MCF 10A (cell line): ENCODE measurements at regions of chr10 and their contacts with region 1.

Region 1: GRCh38 chr10:113854011-113854760 is at the starts of genes DCLRE1A and NHLRC2:
- DNase-seq: peak; percentile 82
- H3K4me3 Mint-ChIP-seq: peak within 1 kb of the TSS; percentile 98
- H3K27ac Mint-ChIP-seq: peak within 1 kb of the TSS; percentile 98
- H3K4me1 Mint-ChIP-seq: peaks cover 14% of the 10 kb centered on the region
- H3K27me3 Mint-ChIP-seq: no peaks in the 10 kb centered on the region
- CTCF ChIP-seq: no peak
- total RNA-seq, gene DCLRE1A: 9.0 and 9.2 TPM in 2 replicates
- total RNA-seq, gene NHLRC2: 39.8 and 40.3 TPM in 2 replicates

Region 2: GRCh38 chr10:113843972-113844485 is 10.2 kb before region 1 on chr10:
- CTCF ChIA-PET with region 1: no interaction called
- POLR2A ChIA-PET with region 1: interaction called, 16 read pairs
- intact Hi-C with region 1: no loop called
- DNase-seq: no peak
- H3K4me3 Mint-ChIP-seq: no peak overlapping the region
- H3K27ac Mint-ChIP-seq: no peak overlapping the region
- H3K4me1 Mint-ChIP-seq: peaks cover 3% of the 10 kb centered on the region
- H3K27me3 Mint-ChIP-seq: no peaks in the 10 kb centered on the region
- CTCF ChIP-seq: no peak